ENCODE measurements at regions of chr2 and their contacts with region 1.

Region 1: DNA sequence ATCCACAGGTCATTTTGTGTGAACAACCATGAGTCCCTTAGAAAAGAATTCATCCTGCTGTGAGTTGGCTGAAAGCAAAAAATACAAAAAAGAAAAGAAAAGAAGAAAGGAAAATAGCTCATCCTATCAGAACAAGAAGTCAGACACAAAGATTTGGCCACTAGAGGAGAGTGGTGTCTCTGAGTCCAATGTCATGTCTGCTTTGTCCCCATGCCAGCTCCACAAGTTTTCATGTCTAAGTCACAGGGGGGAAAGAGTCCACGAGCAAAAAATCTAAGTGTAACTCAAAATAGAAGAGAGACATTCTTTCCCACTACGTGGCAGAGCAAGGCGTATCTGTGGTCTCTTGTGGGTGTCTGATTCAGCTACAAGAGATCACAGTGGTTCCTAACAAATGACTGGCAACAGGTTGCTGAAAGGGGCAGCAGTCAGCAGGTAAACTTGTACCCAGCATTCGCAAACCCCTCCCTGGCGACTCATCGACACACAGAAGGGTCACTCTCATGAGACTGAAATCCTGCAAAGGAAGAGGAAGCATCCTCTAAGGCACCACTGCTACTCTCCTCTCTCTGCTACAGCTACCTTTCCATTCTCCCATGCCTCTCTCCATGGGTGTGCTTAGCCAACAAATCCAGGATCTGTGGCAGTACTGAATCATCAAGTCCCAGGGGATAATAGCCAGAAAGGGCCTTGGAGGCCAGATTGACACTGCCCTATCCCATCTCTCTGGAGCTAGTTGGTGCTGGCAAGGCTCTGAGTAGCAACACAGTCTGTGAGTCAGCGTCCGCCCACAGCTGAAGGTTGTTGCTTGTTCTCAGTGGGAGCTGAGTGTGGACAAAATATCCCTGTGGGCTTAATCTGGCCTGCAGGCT is 123.0 kb upstream of the SLC39A10 start:
- DNase-seq: peak; percentile 89
- H3K4me3 ChIP-seq: peak overlapping the region; percentile 32
- CTCF ChIP-seq: peak; percentile 13

Region 2: DNA sequence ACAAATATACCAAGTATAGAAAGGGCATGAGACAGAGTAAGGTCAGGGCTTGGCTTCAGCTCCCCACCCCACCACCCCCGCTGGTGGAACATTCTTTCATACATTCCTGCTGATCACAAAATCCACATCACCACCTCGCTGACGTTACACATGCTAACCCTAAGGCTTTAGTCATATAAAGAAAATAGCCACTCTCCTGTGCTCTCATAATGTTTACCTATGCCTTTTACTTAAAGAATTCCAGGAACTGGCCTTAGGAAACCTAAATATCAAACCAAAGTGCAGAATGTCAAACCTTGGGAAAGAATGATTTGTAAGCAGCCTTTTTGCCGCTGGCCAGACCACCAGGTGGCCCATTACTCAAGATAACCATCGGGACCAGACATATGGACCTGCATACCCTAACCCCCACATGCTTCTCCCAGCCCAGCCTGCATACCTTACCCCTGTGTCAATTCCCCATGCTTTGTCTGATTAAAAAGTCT is 13.3 kb before region 1 on chr2:
- CTCF ChIA-PET with region 1: no interaction called
- POLR2A ChIA-PET with region 1: interaction called, 14 read pairs
- DNase-seq: peak; percentile 96
- H3K4me3 ChIP-seq: no peak overlapping the region
- CTCF ChIP-seq: no peak

Region 3: GRCh38 chr2:195543902-195544894 is 10.2 kb after region 1 on chr2:
- CTCF ChIA-PET with region 1: interaction called, 21 read pairs
- POLR2A ChIA-PET with region 1: interaction called, 4 read pairs
- DNase-seq: peak; percentile 47
- H3K4me3 ChIP-seq: no peak overlapping the region
- CTCF ChIP-seq: no peak

Region 4: DNA sequence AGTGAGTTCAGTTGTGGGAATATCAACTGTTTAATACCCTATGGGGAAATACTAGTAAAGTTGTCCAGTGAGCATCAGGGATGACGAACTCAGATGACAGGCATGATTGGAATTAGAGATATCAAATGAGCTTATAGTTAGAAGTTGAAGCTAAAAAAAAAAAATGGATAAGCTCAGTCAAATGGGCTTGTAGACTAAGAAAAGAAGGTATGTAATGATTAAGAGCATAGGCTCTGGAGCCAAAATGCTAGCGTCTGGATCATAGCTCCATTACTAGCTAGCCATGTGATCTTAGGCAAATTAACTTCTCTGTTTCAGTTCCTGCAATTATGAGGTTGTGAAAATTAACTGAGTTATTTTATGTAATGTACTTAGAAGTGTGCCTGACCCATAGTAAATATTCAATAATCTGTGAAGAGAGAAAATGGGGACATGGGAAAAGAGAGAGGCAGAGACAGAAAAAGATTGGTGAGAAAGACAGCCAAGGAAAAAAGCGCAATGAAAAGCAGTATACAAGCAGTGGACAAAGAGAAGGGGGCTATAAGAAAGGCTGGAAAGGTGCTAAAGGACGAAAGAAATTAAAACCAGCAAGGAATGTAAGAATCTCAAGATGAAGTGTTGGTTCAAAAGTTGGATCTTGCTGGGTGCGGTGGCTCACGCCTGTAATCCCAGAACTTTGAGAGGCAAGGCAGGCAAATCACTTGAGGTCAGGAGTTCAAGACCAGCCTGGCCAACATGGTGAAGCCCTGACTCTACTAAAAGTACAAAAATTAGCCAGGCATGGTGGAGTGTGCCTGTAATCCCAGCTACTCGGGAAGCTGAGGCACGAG is 27.4 kb after region 1 on chr2:
- CTCF ChIA-PET with region 1: interaction called, 5 read pairs
- POLR2A ChIA-PET with region 1: interaction called, 12 read pairs
- DNase-seq: peak; percentile 98
- H3K4me3 ChIP-seq: no peak overlapping the region
- CTCF ChIP-seq: no peak

Region 5: GRCh38 chr2:195612611-195613495 is 78.8 kb after region 1 on chr2:
- CTCF ChIA-PET with region 1: no interaction called
- POLR2A ChIA-PET with region 1: interaction called, 18 read pairs
- DNase-seq: peak; percentile 47
- H3K4me3 ChIP-seq: peak overlapping the region; percentile 48
- CTCF ChIP-seq: no peak

Measured in AG04449 (cell line).